ENCODE measurements at regions of chr11 and their contacts with region 1.

Region 1: DNA sequence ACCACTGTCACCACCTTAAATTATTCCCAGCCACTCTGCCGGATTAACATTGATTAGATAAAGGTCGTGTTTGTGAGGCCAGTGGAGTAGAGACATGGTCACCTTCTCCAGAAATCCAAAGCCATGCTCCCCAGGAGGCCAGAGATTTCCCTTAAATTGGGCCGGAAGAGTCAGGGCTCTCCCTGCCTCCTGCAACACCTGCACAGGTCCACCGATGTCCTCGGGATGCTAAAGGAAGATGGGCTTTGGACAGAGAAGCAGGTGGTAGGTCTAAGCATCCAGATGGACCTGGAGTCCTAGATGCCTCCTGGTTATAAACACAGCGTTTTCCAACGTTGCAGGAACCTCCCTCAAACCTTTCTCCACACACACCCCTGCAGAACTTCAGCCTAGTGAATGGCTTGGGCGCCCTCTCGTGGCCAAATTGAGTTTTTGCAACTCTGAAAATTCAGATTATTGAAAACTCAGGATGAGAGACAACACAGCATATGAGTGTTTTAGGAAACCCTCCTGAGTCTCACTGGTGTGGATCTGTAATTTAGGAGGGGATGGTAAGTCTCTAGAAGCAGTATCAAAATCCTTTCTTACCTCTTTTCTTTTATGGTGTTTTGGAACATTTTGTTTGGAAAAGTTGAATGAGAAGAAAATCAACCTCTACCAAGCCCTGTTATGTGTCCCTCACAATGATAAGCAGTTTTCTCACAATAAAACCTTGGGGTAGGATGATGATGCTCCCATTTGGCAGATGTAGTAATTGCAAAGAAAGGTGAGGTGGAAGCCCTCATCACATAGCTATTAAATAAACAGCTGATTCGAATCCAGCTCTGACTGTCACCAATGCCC is 109.6 kb downstream of the RRAS2 start:
- DNase-seq: peak; percentile 36
- H3K4me3 ChIP-seq: no peak overlapping the region
- H3K27ac ChIP-seq: no peak overlapping the region
- H3K4me1 ChIP-seq: no peaks in the 10 kb centered on the region
- H3K27me3 ChIP-seq: peaks cover 3% of the 10 kb centered on the region
- CTCF ChIP-seq: peak; percentile 70 to 85

Region 2: GRCh38 chr11:13970986-13971385 is 278.4 kb before region 1 on chr11:
- CTCF ChIA-PET with region 1: no interaction called
- dilution Hi-C with region 1: loop called (anchors 25 kb)
- in situ Hi-C with region 1: no loop called
- intact Hi-C with region 1: loop called (anchors 1 kb)
- DNase-seq: peak; percentile 23
- H3K4me3 ChIP-seq: no peak overlapping the region
- H3K27ac ChIP-seq: no peak overlapping the region
- H3K4me1 ChIP-seq: no peaks in the 10 kb centered on the region
- H3K27me3 ChIP-seq: peaks cover 8% of the 10 kb centered on the region
- CTCF ChIP-seq: peak; percentile 75 to 93